Naive thymus-derived CD8-positive, alpha-beta T cell (primary cell): ENCODE measurements at regions of chr12 and their contacts with region 1.

Region 1: DNA sequence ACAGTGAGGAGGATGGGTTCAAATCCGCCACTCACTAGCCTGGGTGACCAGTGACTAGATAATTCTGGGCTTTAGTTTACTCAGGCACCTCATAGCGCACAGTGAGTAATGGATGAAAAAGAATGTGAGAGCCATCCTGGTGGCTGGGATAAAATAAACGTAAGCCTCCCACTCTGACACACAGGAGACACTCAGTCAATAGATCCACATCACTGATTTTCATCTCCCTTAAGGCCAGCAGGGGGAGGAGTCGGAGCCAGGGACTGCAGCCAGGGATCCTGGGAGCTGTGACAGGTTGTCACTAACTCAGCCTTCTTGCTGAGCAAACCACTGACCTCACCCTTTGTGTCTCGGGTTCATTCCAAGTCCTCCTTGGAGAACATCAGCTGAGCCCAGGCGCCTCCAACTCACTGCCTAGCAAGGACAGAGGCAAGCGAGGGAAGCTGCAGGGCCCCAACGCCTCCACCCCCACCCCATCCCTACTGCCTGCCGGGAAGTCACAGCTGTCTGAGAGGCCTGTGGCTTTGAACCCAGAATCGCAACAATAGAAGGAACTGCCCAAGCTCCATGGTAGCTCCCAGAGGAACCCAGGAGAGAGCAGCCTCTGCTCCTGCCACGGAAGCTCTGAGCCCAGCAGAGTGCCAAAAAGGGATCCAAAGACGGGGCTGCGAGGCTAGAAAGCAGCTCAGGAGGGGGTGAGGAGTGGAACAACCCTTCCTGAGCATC is 30.7 kb downstream of the PXN start:
- DNase-seq: no peak
- ATAC-seq: no peak
- H3K4me3 Mint-ChIP-seq: peak overlapping the region in 2 of 10 donors; percentile 18 to 20
- H3K27ac Mint-ChIP-seq: peak overlapping the region; percentile 50 to 95 (median 78)
- H3K4me1 Mint-ChIP-seq: peaks cover 42 to 96% (median 88%) of the 10 kb centered on the region in 4 donors
- H3K27me3 Mint-ChIP-seq: no peaks in the 10 kb centered on the region

Region 2: GRCh38 chr12:120249875-120250795 is 15.3 kb after region 1 on chr12:
- POLR2A ChIA-PET with region 1: interaction called, 149 read pairs
- DNase-seq: peak in 3 of 10 donors; percentile 33 to 49 (median 37)
- ATAC-seq: no peak
- H3K4me3 Mint-ChIP-seq: peak overlapping the region; percentile 59 to 86 (median 78)
- H3K27ac Mint-ChIP-seq: peak overlapping the region; percentile 58 to 98 (median 94)
- H3K4me1 Mint-ChIP-seq: peaks cover 45 to 86% (median 84%) of the 10 kb centered on the region in 4 donors
- H3K27me3 Mint-ChIP-seq: peaks cover 0 to 3% (median 0%) of the 10 kb centered on the region in 5 donors

Region 3: DNA sequence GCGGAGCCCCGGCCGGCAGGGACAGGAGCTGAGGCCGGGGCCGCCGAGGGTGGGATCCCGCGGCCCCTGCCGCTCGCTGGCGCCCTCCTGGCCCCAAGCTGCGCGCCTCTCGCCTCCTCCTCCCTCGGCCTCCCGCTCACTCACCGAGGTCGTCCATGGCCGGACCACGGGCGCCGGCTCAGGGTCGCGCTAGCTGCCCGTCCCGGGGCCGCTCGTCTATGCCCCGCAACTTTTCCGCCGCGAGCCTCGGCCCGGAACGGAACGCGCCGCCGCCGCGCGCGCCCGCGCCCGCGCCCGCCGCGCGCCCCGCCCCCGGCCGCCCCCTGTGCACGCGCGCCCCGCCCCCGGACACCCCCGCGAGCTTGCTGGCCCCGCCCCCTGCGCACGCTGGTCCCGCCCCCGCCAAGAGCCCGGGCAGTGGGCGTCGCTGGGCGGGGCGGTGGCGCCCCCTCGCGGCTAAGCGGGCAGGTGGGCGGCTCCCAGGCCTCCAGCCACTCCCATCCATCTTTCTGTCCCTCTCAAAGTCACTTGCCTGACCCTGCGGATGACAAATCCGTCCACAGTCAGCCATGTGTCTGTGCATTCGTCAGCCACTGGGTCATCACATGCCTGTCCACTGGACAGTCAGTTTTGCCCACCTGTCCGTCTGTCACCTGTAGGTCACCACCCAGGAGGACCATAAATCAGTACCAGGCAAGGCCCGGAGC is 30.8 kb after region 1 on chr12 and contains the start of gene PXN:
- POLR2A ChIA-PET with region 1: interaction called, 211 read pairs
- DNase-seq: peak; percentile 82 to 100 (median 92)
- ATAC-seq: peak; percentile 83 to 84
- H3K4me3 Mint-ChIP-seq: peak within 1 kb of the TSS; percentile 89 to 96 (median 94)
- H3K27ac Mint-ChIP-seq: peak within 1 kb of the TSS; percentile 82 to 96 (median 92)
- H3K4me1 Mint-ChIP-seq: peaks cover 16 to 49% (median 43%) of the 10 kb centered on the region in 4 donors
- H3K27me3 Mint-ChIP-seq: peaks cover 0 to 2% (median 0%) of the 10 kb centered on the region in 5 donors
- polyA plus RNA-seq, gene PXN: 64.3 to 95.6 (median 80.4) TPM